Dorsolateral prefrontal cortex (tissue), 120 donors: ENCODE measurements at regions of chr11 and their contacts with region 1.

Region 1: DNA sequence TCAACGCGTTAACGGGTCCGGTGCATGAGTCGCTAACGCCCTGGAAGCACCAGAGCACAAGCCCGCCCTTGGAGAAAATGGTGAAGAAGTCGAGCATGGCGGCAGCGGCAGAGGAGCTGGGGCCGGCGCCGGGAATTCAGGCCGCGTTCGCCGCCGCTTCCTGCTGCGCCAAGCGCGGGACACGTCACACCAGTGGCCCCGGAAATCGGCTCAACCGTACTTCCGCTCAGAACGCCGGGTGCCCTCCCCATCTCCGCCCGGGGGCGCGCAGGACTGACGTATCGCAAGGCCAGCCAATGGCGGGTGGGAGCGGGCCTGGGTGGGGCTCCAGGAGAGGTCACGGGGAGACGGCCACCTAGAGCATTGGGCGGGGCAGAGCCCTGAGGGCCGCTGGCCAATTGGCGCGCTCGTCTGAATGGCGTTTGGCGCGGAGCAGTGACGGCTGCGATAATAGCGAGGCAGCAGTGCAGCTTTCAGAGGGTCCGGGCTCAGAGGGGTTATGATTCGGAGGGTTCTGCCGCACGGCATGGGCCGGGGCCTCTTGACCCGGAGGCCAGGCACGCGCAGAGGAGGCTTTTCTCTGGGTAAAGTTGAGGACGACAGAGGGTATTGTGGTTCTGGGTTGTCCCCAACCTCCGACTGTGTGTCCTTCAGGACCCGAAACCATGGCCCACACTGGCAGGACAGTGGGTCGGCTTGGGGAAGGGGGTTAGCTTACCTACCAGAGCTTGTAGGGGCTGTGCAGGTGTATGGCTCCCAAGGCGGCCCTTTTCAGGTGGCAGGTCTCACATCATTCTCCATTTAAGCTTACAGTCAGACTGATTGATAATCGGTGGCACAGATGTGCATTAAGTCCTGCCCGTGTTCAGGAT is at the starts of genes FOXRED1 and SRPRA:
- DNase-seq: peak; percentile 98 to 100 (median 99)
- H3K4me3 ChIP-seq: peak within 1 kb of the TSS; percentile 58 to 100 (median 93)
- H3K27ac ChIP-seq: peak within 1 kb of the TSS; percentile 53 to 95 (median 86)
- H3K27me3 ChIP-seq: no peaks in the 10 kb centered on the region
- CTCF ChIP-seq: peak in 29 of 56 donors; percentile 5 to 55 (median 29)
- total RNA-seq, gene FOXRED1: 46.1 to 103 (median 68.0) TPM
- total RNA-seq, gene SRPRA: 48.5 to 86.8 (median 67.0) TPM

Region 2: GRCh38 chr11:125918140-125918840 is 350.7 kb before region 1 on chr11:
- intact Hi-C with region 1: no loop called
- DNase-seq: no peak
- H3K4me3 ChIP-seq: no peak overlapping the region
- H3K27ac ChIP-seq: no peak overlapping the region
- H3K27me3 ChIP-seq: no peaks in the 10 kb centered on the region
- CTCF ChIP-seq: no peak

Region 3: DNA sequence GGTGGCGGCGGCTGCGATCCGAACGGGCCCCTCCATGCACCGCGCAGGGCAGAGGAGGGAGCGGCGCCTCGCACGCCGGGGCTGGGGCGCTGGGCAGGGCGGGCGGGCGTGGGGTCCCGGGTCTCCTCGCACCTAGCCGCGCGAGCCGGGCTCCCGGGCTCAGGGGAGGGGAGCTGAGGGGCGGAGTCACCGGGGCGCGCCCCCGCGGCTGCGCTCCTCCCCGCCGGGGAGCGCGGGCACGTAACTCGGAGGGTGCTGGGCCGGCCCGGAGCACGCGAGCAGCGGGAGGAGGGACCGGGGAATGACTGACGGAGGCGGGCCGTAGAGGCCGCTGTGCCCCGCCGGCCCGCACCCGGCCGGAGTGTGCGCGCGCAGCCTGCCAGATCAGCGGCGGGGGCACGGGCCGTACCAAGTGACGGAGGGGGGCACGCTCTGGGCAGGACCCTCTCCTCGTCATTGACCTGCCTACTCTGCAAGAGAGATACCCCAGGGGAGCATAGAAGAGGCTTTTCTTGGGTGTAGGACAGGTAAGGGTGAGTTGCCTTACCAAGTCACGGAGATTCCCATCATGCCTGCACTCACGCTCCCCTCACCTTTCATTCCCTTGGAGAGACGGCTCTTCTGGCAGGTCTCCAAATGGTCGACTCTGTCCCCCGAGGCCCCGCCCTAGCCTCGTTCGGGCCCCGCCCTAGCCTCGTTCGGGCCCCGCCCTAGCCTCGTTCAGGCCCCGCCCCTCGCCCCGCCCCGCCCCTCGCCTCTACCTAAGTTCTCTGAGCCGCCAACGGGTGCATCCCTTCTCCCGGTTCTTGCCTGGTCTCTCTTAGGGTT is 206.1 kb before region 1 on chr11 and contains the start of gene CDON:
- intact Hi-C with region 1: loop called in 1 of 2 experiments (anchors 5 kb)
- DNase-seq: peak; percentile 69 to 95 (median 84)
- H3K4me3 ChIP-seq: peak within 1 kb of the TSS; percentile 54 to 96 (median 77)
- H3K27ac ChIP-seq: peak within 1 kb of the TSS in 52 of 59 donors; percentile 9 to 90 (median 72)
- H3K27me3 ChIP-seq: no peaks in the 10 kb centered on the region
- CTCF ChIP-seq: peak in 41 of 56 donors; percentile 7 to 55 (median 27)
- total RNA-seq, gene CDON: 10.0 to 38.0 (median 18.7) TPM

Region 4: GRCh38 chr11:126282736-126283591 is 14.0 kb after region 1 on chr11 and contains the start of gene TIRAP:
- intact Hi-C with region 1: loop called in 1 of 2 experiments (anchors 1 kb)
- DNase-seq: peak; percentile 32 to 78 (median 64)
- H3K4me3 ChIP-seq: peak within 1 kb of the TSS; percentile 59 to 90 (median 78)
- H3K27ac ChIP-seq: peak within 1 kb of the TSS; percentile 12 to 97 (median 92)
- H3K27me3 ChIP-seq: no peaks in the 10 kb centered on the region
- CTCF ChIP-seq: peak in 4 of 56 donors; percentile 7 to 20 (median 9)
- total RNA-seq, gene TIRAP: 2.4 to 13.6 (median 7.4) TPM